ENCODE measurements at regions of chr16 and their contacts with region 1.

Region 1: DNA sequence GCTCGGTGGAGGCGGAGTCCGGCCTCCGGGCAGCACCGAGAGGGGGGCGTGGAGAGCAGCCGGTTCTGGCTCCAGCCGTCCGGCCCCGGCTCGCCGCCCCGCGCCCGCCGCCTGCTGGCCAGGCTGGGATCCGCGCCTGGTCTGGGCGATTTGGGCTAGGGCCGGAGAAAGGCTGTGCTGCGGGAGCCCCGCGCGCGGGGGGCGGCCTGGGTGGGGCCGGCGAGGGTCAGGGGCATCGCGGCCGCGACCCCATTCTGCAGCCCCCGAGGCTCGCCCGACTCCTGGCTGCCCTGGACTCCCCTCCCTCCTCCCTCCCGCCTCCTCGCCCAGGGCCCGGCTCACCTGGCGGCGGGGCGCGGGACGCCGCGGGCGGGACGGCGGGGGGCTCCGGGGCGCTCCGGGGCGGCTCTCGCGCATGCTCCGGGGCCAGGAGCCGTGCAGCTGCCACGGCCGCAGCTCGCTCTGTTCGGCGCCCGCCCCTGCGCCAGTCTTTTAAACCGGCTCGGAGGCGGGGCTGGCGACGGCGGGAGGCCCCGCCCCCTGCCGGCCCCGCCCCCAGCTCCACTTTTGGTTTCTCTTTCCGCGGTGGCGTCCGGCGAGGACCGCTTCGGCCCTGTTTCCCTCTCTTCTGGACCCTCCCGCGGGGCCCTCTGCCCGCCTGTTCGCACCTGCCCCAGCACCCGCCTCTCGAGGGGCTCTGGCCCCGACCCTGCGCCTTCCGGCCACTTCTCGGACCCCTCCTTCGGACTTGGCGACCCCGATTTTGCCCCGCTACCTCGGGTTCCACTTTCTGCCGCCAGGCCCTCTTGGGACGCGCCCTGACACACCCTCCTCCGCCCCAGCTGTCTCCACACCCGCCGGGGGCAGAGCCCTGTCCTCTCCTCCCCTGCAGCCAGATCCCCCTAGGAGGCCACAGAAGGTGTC is at the start of gene SOCS1:
- DNase-seq: peak; percentile 78 to 87 (median 83)
- H3K4me3 ChIP-seq: peak within 1 kb of the TSS; percentile 73 to 85
- H3K4me3 Mint-ChIP-seq: peak within 1 kb of the TSS; percentile 90 to 98 (median 94)
- H3K27ac ChIP-seq: peak within 1 kb of the TSS; percentile 83
- H3K27ac Mint-ChIP-seq: peak within 1 kb of the TSS; percentile 92 to 99 (median 97)
- H3K4me1 ChIP-seq: peaks cover 60% of the 10 kb centered on the region
- H3K4me1 Mint-ChIP-seq: peaks cover 38 to 77% (median 48%) of the 10 kb centered on the region in 4 donors
- H3K27me3 ChIP-seq: no peaks in the 10 kb centered on the region
- H3K27me3 Mint-ChIP-seq: no peaks in the 10 kb centered on the region
- total RNA-seq, gene SOCS1: 14.7 to 16.7 TPM

Region 2: DNA sequence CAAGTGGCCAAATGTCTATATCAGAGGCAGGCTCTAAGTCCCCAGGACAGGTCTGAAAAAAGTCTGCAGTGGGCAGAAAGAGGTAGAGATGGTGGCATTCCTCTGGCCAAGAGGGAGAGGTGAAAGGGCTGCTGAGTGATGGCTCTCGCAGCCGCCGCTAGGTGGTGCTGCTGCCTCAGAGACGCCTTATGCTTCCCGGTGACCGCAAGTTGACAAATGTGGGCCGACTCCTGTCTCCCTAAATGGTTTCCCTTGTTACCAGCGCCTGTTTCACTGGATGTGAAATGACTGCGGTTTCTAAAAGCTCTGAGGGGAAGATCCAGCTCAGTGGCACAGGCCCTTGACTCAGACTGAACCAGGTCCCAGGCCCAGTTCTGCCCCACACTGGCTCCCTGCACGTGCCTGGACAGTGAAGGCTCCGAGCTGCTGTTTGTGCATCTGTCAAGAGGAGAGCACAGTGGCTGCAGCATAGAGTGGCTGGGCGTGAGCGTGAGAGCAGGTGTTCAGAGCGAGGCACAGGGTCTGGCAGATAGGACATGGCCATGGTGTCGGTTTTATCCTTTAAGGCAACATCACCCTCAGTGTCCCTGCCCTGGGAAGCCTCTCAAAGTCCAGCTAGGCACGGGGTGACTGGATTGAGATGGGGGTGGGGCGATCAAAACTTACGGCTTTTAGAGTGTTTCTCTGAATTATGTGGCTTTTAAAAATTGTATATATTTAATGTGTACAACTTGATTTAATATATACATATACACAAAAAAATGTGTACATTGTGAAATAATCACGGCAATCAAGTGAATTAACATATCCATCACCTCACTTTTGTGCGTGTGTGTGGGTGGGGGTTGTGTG is 291.7 kb before region 1 on chr16:
- CTCF ChIA-PET with region 1: interaction called, 197 read pairs
- POLR2A ChIA-PET with region 1: interaction called, 83 read pairs
- intact Hi-C with region 1: loop called (anchors 1 kb)
- DNase-seq: peak; percentile 71 to 82 (median 77)
- H3K4me3 ChIP-seq: peak overlapping the region in 1 of 2 donors; percentile 39
- H3K4me3 Mint-ChIP-seq: peak overlapping the region in 7 of 8 donors; percentile 68 to 83 (median 75)
- H3K27ac ChIP-seq: peak overlapping the region; percentile 63
- H3K27ac Mint-ChIP-seq: peak overlapping the region; percentile 88 to 95 (median 92)
- H3K4me1 ChIP-seq: peaks cover 20% of the 10 kb centered on the region
- H3K4me1 Mint-ChIP-seq: peaks cover 21 to 39% (median 26%) of the 10 kb centered on the region in 4 donors
- H3K27me3 ChIP-seq: no peaks in the 10 kb centered on the region
- H3K27me3 Mint-ChIP-seq: no peaks in the 10 kb centered on the region

Region 3: GRCh38 chr16:11089504-11090124 is 166.4 kb before region 1 on chr16:
- CTCF ChIA-PET with region 1: interaction called, 4 read pairs
- POLR2A ChIA-PET with region 1: interaction called, 15 read pairs
- intact Hi-C with region 1: no loop called
- DNase-seq: no peak
- H3K4me3 ChIP-seq: no peak overlapping the region
- H3K4me3 Mint-ChIP-seq: no peak overlapping the region
- H3K27ac ChIP-seq: no peak overlapping the region
- H3K27ac Mint-ChIP-seq: peak overlapping the region in 1 of 7 donors; percentile 45
- H3K4me1 ChIP-seq: peaks cover 64% of the 10 kb centered on the region
- H3K4me1 Mint-ChIP-seq: peaks cover 36 to 72% (median 51%) of the 10 kb centered on the region in 4 donors
- H3K27me3 ChIP-seq: no peaks in the 10 kb centered on the region
- H3K27me3 Mint-ChIP-seq: no peaks in the 10 kb centered on the region

Region 4: DNA sequence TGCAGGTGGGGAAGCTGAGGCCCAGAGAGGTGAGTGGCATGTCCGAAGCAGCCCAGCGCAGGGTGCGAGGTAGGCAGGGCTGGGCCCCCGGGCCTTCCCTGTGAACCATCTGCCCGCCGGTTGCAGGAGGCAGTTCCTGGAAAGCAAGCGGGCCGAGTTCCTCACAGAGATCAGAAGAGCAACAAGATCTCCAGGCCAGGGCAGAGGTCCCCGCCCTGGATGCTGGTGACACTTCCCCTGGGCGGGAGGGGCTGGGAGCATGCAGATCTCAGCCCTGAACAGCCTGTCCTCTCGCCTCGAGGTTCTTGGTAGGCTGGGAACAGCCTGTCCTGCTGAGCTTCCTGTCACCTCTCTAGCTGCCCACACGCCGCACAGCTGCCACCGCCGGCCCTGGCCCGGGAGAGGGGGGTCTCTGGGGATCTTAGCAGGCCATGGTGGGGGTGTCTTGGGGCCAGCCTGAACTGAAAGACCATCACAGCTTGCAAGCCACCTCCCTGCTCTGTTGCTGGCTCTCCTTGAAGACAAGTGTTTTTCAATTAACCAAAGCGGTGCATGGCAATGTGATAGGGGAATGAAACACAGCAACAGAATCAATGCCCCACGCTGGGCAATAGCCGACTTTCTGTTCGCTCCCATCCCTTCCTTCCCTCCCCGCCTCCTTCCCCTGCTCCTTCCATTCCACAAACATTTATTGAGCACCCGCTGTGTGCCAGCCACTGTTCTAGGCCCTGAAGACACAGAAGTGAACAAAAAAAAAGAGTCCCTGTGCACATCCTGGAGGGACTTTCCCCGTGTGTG is 31.7 kb before region 1 on chr16:
- CTCF ChIA-PET with region 1: interaction called, 69 read pairs
- POLR2A ChIA-PET with region 1: interaction called, 283 read pairs
- intact Hi-C with region 1: loop called (anchors 1 kb)
- DNase-seq: peak; percentile 59 to 72 (median 63)
- H3K4me3 ChIP-seq: peak overlapping the region in 1 of 2 donors; percentile 56
- H3K4me3 Mint-ChIP-seq: peak overlapping the region; percentile 70 to 92 (median 80)
- H3K27ac ChIP-seq: peak overlapping the region; percentile 75
- H3K27ac Mint-ChIP-seq: peak overlapping the region; percentile 92 to 99 (median 98)
- H3K4me1 ChIP-seq: peaks cover 41% of the 10 kb centered on the region
- H3K4me1 Mint-ChIP-seq: peaks cover 27 to 60% (median 43%) of the 10 kb centered on the region in 4 donors
- H3K27me3 ChIP-seq: no peaks in the 10 kb centered on the region
- H3K27me3 Mint-ChIP-seq: no peaks in the 10 kb centered on the region

Region 5: DNA sequence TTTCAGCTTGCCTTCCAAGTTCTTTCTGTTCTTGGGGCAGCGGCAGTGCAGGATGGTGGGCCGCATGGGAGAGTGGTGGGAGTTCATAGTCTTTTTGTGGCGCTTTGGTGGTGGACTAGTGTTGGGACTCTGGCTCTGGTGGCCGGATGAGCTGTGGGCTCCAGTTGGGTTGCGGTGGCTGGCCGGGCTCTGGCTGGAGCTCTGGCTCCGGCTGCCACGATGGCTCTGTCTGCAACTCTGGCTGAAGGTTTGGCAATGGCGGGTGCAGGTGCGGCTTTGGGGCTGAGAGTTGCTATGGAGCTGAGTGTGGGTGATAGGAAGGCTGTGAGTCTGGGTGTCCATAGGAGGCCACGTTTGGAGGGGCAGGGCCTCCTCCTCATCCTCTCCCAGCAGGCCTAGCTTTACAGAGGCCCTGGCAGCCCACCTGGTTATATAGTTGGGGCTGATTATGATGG is 12.9 kb after region 1 on chr16 and contains the start of gene TNP2:
- CTCF ChIA-PET with region 1: interaction called, 6 read pairs
- POLR2A ChIA-PET with region 1: interaction called, 20 read pairs
- intact Hi-C with region 1: no loop called
- DNase-seq: no peak
- H3K4me3 ChIP-seq: no peak within 1 kb of the TSS
- H3K4me3 Mint-ChIP-seq: no peak within 1 kb of the TSS
- H3K27ac ChIP-seq: no peak within 1 kb of the TSS
- H3K27ac Mint-ChIP-seq: peak within 1 kb of the TSS in 2 of 7 donors; percentile 33 to 68
- H3K4me1 ChIP-seq: peaks cover 8% of the 10 kb centered on the region
- H3K4me1 Mint-ChIP-seq: peaks cover 4 to 12% (median 7%) of the 10 kb centered on the region in 4 donors
- H3K27me3 ChIP-seq: no peaks in the 10 kb centered on the region
- H3K27me3 Mint-ChIP-seq: no peaks in the 10 kb centered on the region
- total RNA-seq, gene TNP2: not detected

Region 6: GRCh38 chr16:11356573-11357331 is 100.8 kb after region 1 on chr16:
- CTCF ChIA-PET with region 1: interaction called, 62 read pairs
- POLR2A ChIA-PET with region 1: interaction called, 38 read pairs
- intact Hi-C with region 1: no loop called
- DNase-seq: peak in 4 of 5 donors; percentile 40 to 48 (median 44)
- H3K4me3 ChIP-seq: no peak overlapping the region
- H3K4me3 Mint-ChIP-seq: no peak overlapping the region
- H3K27ac ChIP-seq: no peak overlapping the region
- H3K27ac Mint-ChIP-seq: peak overlapping the region in 4 of 7 donors; percentile 11 to 56 (median 38)
- H3K4me1 ChIP-seq: peaks cover 47% of the 10 kb centered on the region
- H3K4me1 Mint-ChIP-seq: peaks cover 37 to 74% (median 50%) of the 10 kb centered on the region in 4 donors
- H3K27me3 ChIP-seq: no peaks in the 10 kb centered on the region
- H3K27me3 Mint-ChIP-seq: peaks cover 4 to 16% of the 10 kb centered on the region in 2 donors

Region 7: GRCh38 chr16:11370084-11370931 is 114.3 kb after region 1 on chr16:
- CTCF ChIA-PET with region 1: no interaction called
- POLR2A ChIA-PET with region 1: no interaction called
- intact Hi-C with region 1: no loop called
- DNase-seq: no peak
- H3K4me3 ChIP-seq: no peak overlapping the region
- H3K4me3 Mint-ChIP-seq: no peak overlapping the region
- H3K27ac ChIP-seq: no peak overlapping the region
- H3K27ac Mint-ChIP-seq: peak overlapping the region in 2 of 7 donors; percentile 0 to 47
- H3K4me1 ChIP-seq: no peaks in the 10 kb centered on the region
- H3K4me1 Mint-ChIP-seq: peaks cover 1 to 11% (median 6%) of the 10 kb centered on the region in 4 donors
- H3K27me3 ChIP-seq: no peaks in the 10 kb centered on the region
- H3K27me3 Mint-ChIP-seq: no peaks in the 10 kb centered on the region

Region 8: GRCh38 chr16:11560701-11561449 is 304.9 kb after region 1 on chr16:
- CTCF ChIA-PET with region 1: no interaction called
- POLR2A ChIA-PET with region 1: no interaction called
- intact Hi-C with region 1: no loop called
- DNase-seq: peak; percentile 84 to 95 (median 86)
- H3K4me3 ChIP-seq: peak overlapping the region; percentile 37 to 60
- H3K4me3 Mint-ChIP-seq: peak overlapping the region; percentile 59 to 91 (median 79)
- H3K27ac ChIP-seq: peak overlapping the region; percentile 86
- H3K27ac Mint-ChIP-seq: peak overlapping the region; percentile 92 to 100 (median 95)
- H3K4me1 ChIP-seq: peaks cover 89% of the 10 kb centered on the region
- H3K4me1 Mint-ChIP-seq: peaks cover 54 to 91% (median 71%) of the 10 kb centered on the region in 4 donors
- H3K27me3 ChIP-seq: no peaks in the 10 kb centered on the region
- H3K27me3 Mint-ChIP-seq: no peaks in the 10 kb centered on the region

Measured in CD4-positive, alpha-beta memory T cell (primary cell).